MCF 10A (cell line): ENCODE measurements at regions of chr6 and their contacts with region 1.

Region 1: GRCh38 chr6:13574149-13574570 is 241 bp upstream of the SIRT5 start:
- DNase-seq: peak; percentile 94
- H3K4me3 Mint-ChIP-seq: peak overlapping the region; percentile 94
- H3K27ac Mint-ChIP-seq: peak overlapping the region; percentile 84
- H3K4me1 Mint-ChIP-seq: peaks cover 5% of the 10 kb centered on the region
- H3K27me3 Mint-ChIP-seq: no peaks in the 10 kb centered on the region
- CTCF ChIP-seq: peak; percentile 40

Region 2: DNA sequence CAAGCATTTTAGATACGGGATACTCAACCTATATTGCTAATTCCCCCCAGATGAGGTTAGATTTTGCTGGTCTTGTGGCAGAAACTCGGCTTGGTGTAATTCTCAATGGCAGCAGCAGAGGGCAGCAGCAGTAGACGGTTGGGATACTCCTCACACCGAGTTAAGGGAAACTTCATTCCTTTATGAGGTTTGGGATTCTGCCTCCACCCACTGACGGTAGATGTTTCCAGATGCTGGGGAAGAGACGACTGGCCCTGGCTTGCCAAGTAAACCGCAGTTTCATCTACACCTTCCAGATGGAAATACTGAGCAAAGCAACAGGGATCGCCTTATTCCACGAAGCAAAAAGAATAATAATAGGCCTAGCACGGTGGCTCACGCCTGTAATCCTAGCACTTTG is 237.6 kb before region 1 on chr6:
- CTCF ChIA-PET with region 1: interaction called, 7 read pairs
- POLR2A ChIA-PET with region 1: interaction called, 40 read pairs
- intact Hi-C with region 1: loop called (anchors 1 kb)
- DNase-seq: peak; percentile 81
- H3K4me3 Mint-ChIP-seq: no peak overlapping the region
- H3K27ac Mint-ChIP-seq: no peak overlapping the region
- H3K4me1 Mint-ChIP-seq: peaks cover 5% of the 10 kb centered on the region
- H3K27me3 Mint-ChIP-seq: no peaks in the 10 kb centered on the region
- CTCF ChIP-seq: peak; percentile 90

Region 3: GRCh38 chr6:13383328-13384163 is 190.6 kb before region 1 on chr6:
- CTCF ChIA-PET with region 1: interaction called, 9 read pairs
- POLR2A ChIA-PET with region 1: interaction called, 10 read pairs
- intact Hi-C with region 1: loop called (anchors 1 kb)
- DNase-seq: peak; percentile 55
- H3K4me3 Mint-ChIP-seq: peak overlapping the region; percentile 32
- H3K27ac Mint-ChIP-seq: peak overlapping the region; percentile 59
- H3K4me1 Mint-ChIP-seq: peaks cover 10% of the 10 kb centered on the region
- H3K27me3 Mint-ChIP-seq: no peaks in the 10 kb centered on the region
- CTCF ChIP-seq: peak; percentile 23

Region 4: DNA sequence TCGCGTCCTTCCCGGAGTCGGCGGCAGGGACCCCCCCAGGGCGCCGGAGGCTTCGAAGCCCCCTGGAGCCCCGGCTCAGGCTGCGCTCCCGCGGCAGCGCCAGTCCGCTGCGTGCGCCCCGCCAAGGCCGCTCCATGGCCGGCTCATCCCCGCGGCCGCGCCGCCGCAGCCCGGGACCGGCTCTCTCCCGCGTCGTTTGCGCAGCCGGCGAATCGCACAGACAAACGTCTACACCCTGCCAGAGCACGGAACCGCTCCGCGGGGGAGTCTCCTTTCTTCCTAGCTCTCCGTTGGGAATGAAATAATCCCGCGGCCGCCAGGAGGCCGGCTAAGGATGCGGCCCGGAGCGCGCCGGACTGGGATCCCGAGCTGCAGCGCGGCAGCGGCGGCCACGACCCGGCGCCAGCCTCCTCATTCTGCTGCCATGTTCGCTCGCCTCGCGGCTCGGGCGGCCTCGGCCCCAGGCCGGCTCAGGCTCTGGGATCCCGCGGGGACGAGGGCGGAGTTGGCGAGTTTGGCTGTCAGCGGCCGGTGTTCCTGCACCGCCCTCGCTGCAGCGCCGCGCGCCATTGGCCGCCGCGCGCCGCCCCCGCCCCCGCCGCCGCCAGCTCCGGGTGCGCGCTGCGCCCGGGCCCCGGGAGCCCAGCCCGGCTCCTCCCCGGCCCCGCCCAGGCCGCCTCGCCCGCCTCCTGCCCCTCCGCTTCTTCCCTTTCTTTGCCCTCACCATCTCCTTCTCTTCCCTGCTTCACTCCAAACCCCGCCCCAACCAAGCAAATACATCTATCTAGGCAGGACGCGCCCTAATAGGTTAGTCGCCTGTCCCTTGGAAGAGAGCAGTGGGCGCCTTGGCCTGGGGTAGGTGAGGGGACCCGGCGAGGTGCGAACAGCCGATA is 86.8 kb before region 1 on chr6 and contains the start of gene GFOD1:
- CTCF ChIA-PET with region 1: interaction called, 18 read pairs
- POLR2A ChIA-PET with region 1: interaction called, 64 read pairs
- intact Hi-C with region 1: loop called (anchors 2 kb)
- DNase-seq: peak; percentile 88
- H3K4me3 Mint-ChIP-seq: peak within 1 kb of the TSS; percentile 78
- H3K27ac Mint-ChIP-seq: peak within 1 kb of the TSS; percentile 50
- H3K4me1 Mint-ChIP-seq: peaks cover 23% of the 10 kb centered on the region
- H3K27me3 Mint-ChIP-seq: no peaks in the 10 kb centered on the region
- CTCF ChIP-seq: peak; percentile 23
- total RNA-seq, gene GFOD1: 7.1 and 9.5 TPM in 2 replicates

Region 5: DNA sequence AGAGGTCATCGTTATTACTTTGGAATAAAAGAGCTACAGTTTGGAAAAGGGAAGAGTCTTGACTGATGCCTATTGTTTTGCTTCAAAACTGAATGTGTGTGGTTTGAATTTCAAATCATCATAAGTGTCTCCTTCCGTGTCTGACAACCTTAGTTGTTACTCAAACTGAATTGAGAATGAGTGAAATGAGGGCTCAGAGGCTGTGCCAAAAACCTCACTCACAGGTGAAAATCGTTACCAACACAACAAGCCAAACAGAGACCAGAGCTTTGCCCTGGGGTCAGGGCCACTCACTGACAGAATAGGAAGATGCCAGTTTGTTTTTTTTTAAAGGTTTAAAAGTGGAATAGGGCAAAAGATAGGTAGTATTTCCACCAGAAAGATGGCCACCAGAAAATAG is 14.9 kb before region 1 on chr6:
- CTCF ChIA-PET with region 1: interaction called, 14 read pairs
- POLR2A ChIA-PET with region 1: interaction called, 3 read pairs
- intact Hi-C with region 1: no loop called
- DNase-seq: peak; percentile 4
- H3K4me3 Mint-ChIP-seq: no peak overlapping the region
- H3K27ac Mint-ChIP-seq: no peak overlapping the region
- H3K4me1 Mint-ChIP-seq: no peaks in the 10 kb centered on the region
- H3K27me3 Mint-ChIP-seq: no peaks in the 10 kb centered on the region
- CTCF ChIP-seq: no peak

Region 6: GRCh38 chr6:13677878-13678254 is 103.7 kb after region 1 on chr6:
- CTCF ChIA-PET with region 1: no interaction called
- POLR2A ChIA-PET with region 1: no interaction called
- intact Hi-C with region 1: no loop called
- DNase-seq: no peak
- H3K4me3 Mint-ChIP-seq: no peak overlapping the region
- H3K27ac Mint-ChIP-seq: no peak overlapping the region
- H3K4me1 Mint-ChIP-seq: peaks cover 6% of the 10 kb centered on the region
- H3K27me3 Mint-ChIP-seq: no peaks in the 10 kb centered on the region
- CTCF ChIP-seq: no peak